ENCODE measurements at regions of chr15 and their contacts with region 1.

Region 1: GRCh38 chr15:44711356-44712107 is at the start of gene B2M:
- DNase-seq: peak; percentile 98
- total RNA-seq, gene B2M: 904 TPM

Region 2: DNA sequence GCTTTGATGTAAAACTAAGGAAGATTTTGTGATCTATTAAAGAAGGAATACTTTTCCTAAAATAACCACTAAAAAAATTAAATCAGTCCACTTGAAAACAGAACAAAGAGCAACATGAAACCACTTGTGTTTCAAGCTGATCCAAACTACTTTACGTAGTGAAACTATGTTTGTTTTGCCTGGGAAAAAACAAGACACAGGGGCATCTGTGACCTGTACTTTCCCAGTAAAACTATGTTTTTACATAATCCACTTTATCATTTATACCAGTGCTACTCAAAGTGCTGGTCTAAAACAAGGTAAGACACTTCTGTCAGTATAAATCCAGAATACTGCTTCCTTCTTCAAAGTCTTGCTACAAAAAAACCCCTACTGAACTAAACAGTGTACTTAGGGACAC is 104.8 kb before region 1 on chr15:
- intact Hi-C with region 1: no loop called
- DNase-seq: no peak

Region 3: DNA sequence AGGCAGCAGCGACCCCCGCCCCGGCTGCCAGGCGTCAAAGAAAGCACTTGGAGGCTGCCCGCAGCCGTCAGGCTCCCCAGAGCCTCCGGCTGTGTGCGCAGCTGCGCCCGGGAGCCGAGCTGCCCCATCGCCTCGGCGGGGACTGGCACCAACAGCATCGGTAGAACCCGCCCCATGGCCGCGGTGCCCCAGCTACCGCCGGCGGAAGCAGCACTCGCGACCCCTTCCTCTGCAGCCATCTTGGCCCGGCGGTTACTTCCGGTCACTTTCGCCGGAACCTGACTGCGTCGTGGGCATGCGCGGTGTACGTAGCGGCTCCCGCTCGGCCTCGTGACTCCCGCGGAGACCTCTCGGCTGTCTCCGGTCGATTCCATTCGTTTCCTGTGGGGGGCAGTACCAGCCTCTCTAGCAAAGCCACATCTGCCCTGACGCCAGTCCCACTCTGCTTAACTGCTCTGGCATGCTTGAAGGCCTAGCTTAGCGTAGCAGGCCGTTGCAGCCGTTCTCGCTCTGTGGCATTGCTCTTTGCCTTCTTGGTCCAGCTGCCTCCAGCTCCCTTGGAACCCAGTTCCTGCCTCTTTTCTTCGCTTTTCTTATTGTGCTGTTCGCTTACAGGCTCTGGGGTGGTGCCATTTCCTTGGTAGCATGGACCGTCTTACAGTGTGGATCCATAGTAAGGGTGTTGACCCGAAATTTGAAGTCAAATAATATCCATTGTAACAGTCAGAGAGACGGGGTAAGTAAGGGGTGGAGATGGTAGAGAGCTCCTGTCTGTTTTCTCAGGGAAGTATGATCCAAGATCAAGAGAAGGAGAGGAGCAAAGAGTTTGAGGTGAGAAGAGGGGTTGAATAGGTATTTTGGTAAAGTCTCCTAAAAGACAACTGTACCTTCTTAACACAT is 47.9 kb before region 1 on chr15 and contains the start of gene SPG11:
- intact Hi-C with region 1: loop called (anchors 1 kb)
- DNase-seq: peak; percentile 99
- total RNA-seq, gene SPG11: 49.2 TPM

Measured in cardiac septum (tissue), 1 donor.